ENCODE measurements at regions of chr16 and their contacts with region 1.

Region 1: GRCh38 chr16:66311306-66311705 is 55.2 kb upstream of the CDH5 start:
- DNase-seq: no peak
- H3K4me3 ChIP-seq: no peak overlapping the region
- H3K4me3 Mint-ChIP-seq: no peak overlapping the region
- H3K27ac ChIP-seq: no peak overlapping the region
- H3K27ac Mint-ChIP-seq: no peak overlapping the region
- H3K4me1 ChIP-seq: no peaks in the 10 kb centered on the region
- H3K4me1 Mint-ChIP-seq: peaks cover 8% of the 10 kb centered on the region
- H3K27me3 ChIP-seq: no peaks in the 10 kb centered on the region
- H3K27me3 Mint-ChIP-seq: peaks cover 0 to 7% (median 2%) of the 10 kb centered on the region in 3 donors
- CTCF ChIP-seq: no peak

Region 2: GRCh38 chr16:66275775-66276428 is 35.4 kb before region 1 on chr16:
- intact Hi-C with region 1: loop called in 1 of 2 experiments (anchors 5 kb)
- DNase-seq: peak in 2 of 3 donors; percentile 32 to 35
- H3K4me3 ChIP-seq: no peak overlapping the region
- H3K4me3 Mint-ChIP-seq: peak overlapping the region in 1 of 2 donors; percentile 12
- H3K27ac ChIP-seq: no peak overlapping the region
- H3K27ac Mint-ChIP-seq: no peak overlapping the region
- H3K4me1 ChIP-seq: no peaks in the 10 kb centered on the region
- H3K4me1 Mint-ChIP-seq: peaks cover 6% of the 10 kb centered on the region
- H3K27me3 ChIP-seq: peaks cover 6 to 9% of the 10 kb centered on the region in 2 donors
- H3K27me3 Mint-ChIP-seq: peaks cover 7 to 28% (median 15%) of the 10 kb centered on the region in 3 donors
- CTCF ChIP-seq: peak; percentile 74

Measured in CD14-positive monocyte (primary cell).